Activated CD4-positive, alpha-beta T cell treated with anti-CD3 and anti-CD28 coated beads for 36 hours (primary cell): ENCODE measurements at regions of chr9 and their contacts with region 1.

Region 1: DNA sequence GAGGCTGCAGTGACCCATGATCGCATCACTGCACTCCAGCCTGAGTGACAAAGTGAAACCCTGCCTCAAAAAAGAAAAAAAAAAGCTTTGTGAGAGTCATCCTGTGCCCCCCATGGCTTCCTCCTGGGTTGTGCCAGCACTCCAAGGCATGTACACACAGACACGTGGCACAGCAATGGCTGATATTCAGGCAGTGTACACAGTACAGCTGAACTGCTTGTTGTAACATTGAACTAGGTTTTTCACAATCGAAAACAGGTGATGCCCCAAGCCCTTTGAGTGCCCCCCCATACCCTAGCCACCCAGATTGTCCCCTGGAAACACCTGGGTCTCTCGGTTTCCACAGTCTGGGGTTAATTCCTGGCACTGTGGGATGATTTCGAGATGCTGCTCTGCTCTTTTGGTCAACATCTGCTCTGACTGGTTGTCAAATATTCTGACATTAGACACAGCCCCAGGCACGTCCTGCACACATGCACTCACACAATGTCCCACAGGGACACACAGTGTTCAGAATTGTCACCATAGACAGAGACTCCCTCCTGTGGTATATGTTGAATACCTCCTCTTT is 9.2 kb downstream of the SPINK4 start:
- DNase-seq: no peak
- ATAC-seq: peak; percentile 36
- H3K4me3 Mint-ChIP-seq: no peak overlapping the region
- H3K27ac Mint-ChIP-seq: no peak overlapping the region
- H3K4me1 Mint-ChIP-seq: no peaks in the 10 kb centered on the region
- H3K27me3 Mint-ChIP-seq: no peaks in the 10 kb centered on the region

Region 2: GRCh38 chr9:33187519-33188218 is 61.5 kb before region 1 on chr9:
- CTCF ChIA-PET with region 1: no interaction called
- POLR2A ChIA-PET with region 1: interaction called, 3 read pairs
- intact Hi-C with region 1: loop called in 1 of 2 experiments (anchors 5 kb)
- DNase-seq: no peak
- ATAC-seq: no peak
- H3K4me3 Mint-ChIP-seq: no peak overlapping the region
- H3K27ac Mint-ChIP-seq: no peak overlapping the region
- H3K4me1 Mint-ChIP-seq: peaks cover 6% of the 10 kb centered on the region
- H3K27me3 Mint-ChIP-seq: no peaks in the 10 kb centered on the region